Motor neuron (in vitro differentiated cells): ENCODE measurements at regions of chr7 and their contacts with region 1.

Region 1: GRCh38 chr7:26667500-26668133 is 196.8 kb downstream of the SKAP2 start:
- ATAC-seq: peak; percentile 87 to 100 (median 100)
- H3K4me3 ChIP-seq: no peak overlapping the region
- H3K27ac ChIP-seq: no peak overlapping the region
- H3K4me1 ChIP-seq: peaks cover 0 to 28% of the 10 kb centered on the region in 2 donors

Region 2: DNA sequence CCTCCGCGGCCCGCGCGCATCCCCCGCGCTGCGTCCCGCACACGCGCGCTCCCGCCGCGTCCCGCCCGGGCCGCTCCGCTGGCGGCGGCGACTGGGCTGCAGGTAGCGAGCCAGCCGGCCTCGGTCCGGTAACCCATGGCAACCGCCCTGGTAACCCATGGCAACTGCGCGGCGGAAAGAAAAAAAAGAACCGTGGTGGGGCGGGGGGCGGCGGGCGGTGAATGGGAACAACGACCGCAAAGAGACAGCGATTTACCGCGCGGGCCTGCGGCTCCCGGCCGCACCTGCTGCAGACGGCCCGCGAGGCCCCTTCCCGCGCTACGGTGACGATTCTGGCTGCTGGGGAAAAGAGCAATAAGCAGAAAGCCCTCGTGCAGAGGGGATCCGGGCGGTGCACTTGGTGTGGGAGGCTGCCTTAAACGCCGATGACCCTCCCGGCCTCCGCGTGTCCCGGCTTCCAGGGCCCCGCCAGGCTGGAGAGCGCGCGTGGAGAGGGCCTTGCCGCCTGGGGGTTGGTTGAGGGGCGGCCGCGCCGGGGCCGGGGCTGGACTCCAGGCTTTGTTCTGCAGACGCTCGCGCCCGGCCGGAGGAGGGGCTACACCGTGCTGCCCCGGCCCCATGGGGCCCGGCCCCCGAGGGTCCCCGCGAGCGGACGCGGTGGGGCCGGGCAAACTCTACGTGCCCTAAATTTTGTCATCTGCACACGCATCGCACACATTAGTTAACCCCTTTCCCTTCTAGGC is 291.3 kb before region 1 on chr7:
- in situ Hi-C with region 1: loop called in 6 of 9 experiments (anchors 10 to 25 kb)
- ATAC-seq: peak; percentile 66 to 80 (median 77)
- H3K4me3 ChIP-seq: peak overlapping the region; percentile 45 to 69 (median 56)
- H3K27ac ChIP-seq: peak overlapping the region; percentile 96
- H3K4me1 ChIP-seq: peaks cover 16 to 33% of the 10 kb centered on the region in 2 donors

Region 3: GRCh38 chr7:26398756-26399501 is 268.7 kb before region 1 on chr7:
- in situ Hi-C with region 1: loop called in 1 of 9 experiments (anchors 25 kb)
- ATAC-seq: peak; percentile 36 to 70 (median 46)
- H3K4me3 ChIP-seq: peak overlapping the region; percentile 38 to 53 (median 48)
- H3K27ac ChIP-seq: peak overlapping the region; percentile 92 to 98
- H3K4me1 ChIP-seq: peaks cover 19 to 37% of the 10 kb centered on the region in 2 donors

Region 4: GRCh38 chr7:26500749-26501352 is 166.8 kb before region 1 on chr7:
- in situ Hi-C with region 1: loop called in 1 of 9 experiments (anchors 25 kb)
- ATAC-seq: peak in 3 of 8 experiments; percentile 55 to 73 (median 66)
- H3K4me3 ChIP-seq: no peak overlapping the region
- H3K27ac ChIP-seq: no peak overlapping the region
- H3K4me1 ChIP-seq: peaks cover 0 to under 1% of the 10 kb centered on the region in 2 donors